ENCODE measurements at regions of chr9 and their contacts with region 1.

Region 1: DNA sequence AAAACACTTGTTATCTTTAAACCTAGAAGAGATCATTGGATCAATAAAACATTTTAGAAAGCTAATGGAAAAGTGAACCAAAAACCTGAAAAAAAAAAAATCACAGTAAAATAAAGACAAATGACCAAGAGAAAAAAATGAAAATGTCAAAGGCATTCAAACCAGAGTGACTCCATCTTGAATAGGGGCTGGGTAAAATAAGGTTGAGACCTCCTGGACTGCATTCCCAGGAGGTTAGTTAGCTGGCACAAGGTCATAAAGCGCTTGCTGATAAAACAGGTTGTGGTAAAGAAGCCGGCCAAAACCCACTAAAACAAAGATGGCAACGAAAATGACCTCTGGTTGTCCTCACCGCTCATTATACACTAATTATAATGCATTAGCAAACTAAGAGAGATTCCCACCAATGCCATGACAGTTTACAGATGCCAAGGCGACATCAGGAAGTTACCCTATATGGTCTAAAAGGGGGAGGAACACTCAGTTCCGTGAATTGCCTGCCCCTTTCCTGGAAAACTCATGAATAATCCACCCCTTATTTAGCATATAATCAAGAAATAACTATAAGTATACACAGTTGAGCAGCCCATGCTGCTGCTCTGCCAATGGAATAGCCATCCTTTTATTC is 116.7 kb upstream of the NEK6 start:
- DNase-seq: no peak
- ATAC-seq: no peak
- H3K4me3 ChIP-seq: no peak overlapping the region
- H3K27ac ChIP-seq: no peak overlapping the region
- H3K4me1 ChIP-seq: peaks cover 32% of the 10 kb centered on the region
- H3K27me3 ChIP-seq: peaks cover 2 to 4% of the 10 kb centered on the region in 2 experiments; a peak in 1 of 5 replicates
- CTCF ChIP-seq: no peak
- EP300 ChIP-seq: no peak
- POLR2A ChIP-seq: no peak
- RAD21 ChIP-seq: no peak

Region 2: DNA sequence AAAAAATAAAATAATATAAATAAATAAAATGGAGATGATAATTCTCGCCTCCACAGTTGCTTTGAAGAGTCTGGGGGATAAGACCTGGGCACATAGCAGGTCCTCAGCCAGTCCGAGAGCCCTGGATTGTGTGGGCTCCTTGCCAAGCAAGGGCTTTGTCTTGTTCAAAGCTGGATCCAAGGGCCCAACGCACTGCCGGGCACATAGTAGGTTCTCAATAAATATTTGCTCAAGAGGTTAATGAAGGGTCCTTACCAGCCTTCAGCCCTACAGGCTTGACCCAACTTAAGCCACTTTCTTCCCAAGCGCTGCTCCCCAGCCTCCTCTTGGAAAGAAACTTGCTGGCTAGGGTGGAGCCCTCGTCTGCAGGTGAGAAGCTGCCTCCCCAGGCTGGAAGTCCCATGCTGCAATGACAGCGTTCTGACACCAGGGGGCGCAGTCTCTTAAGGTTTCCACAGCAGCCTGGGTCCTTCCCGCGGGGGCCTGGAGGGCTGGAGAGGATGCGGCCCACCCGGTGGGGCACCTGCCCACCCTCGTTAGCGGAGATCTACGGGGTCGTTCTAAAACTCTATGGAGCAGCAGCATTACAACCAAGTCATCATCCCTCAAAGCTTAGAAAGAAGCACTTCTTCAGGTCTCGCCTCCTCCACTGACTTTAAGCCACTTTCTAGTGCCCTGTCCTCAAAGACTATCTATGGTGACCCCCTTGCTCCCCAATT is 14.3 kb before region 1 on chr9:
- CTCF ChIA-PET with region 1: no interaction called
- POLR2A ChIA-PET with region 1: no interaction called
- in situ Hi-C with region 1: no loop called
- intact Hi-C with region 1: no loop called
- DNase-seq: peak; percentile 56
- ATAC-seq: peak; percentile 69
- H3K4me3 ChIP-seq: no peak overlapping the region
- H3K27ac ChIP-seq: no peak overlapping the region
- H3K4me1 ChIP-seq: peaks cover 20% of the 10 kb centered on the region
- H3K27me3 ChIP-seq: peaks cover 2 to 13% of the 10 kb centered on the region in 2 experiments; a peak in 3 of 5 replicates
- CTCF ChIP-seq: peak; percentile 97
- EP300 ChIP-seq: no peak
- POLR2A ChIP-seq: no peak
- RAD21 ChIP-seq: peak; percentile 90

Region 3: DNA sequence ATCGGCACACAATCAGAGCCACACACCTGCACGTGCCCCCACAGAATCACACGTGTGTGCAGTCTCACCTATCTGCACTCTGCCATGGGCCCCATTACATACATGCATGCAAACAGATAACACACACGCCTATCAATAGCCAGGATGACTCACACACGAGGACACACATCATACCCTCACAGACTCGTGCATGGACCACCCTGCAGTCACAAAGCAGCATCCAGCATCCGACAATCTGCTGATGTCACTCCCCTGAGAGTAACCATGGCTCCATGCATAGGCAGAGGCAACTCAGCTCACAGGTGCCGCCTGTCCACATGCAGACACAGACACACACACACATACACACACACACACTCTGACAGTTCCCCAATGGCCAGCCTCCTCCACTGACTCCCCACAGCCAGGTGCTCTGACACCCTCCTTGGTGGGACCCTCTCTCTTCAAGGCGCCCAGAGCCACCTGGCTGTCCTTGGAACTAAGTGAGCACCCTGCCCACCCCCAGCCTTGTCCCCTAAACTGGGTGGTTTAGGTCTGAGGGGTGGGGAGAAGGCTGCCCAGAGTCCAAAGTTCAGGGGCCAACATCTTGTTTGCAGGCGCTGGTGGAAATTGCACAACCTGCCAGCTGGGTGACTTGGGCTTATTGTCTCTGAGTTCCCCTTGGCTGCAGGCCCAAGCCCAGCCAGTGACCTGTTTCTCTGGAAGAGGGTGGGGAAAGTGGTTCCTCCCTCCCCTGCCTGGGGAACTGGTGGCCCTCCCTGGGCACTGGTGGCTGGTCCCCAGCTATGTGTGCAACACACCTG is 82.1 kb after region 1 on chr9:
- CTCF ChIA-PET with region 1: no interaction called
- POLR2A ChIA-PET with region 1: interaction called, 3 read pairs
- in situ Hi-C with region 1: no loop called
- intact Hi-C with region 1: loop called (anchors 5 kb)
- DNase-seq: peak; percentile 96
- ATAC-seq: peak; percentile 88
- H3K4me3 ChIP-seq: peak overlapping the region in 1 of 3 experiments; percentile 47; a peak in 2 of 6 replicates
- H3K27ac ChIP-seq: peak overlapping the region; percentile 60
- H3K4me1 ChIP-seq: peaks cover 65% of the 10 kb centered on the region
- H3K27me3 ChIP-seq: no peaks in the 10 kb centered on the region
- CTCF ChIP-seq: peak; percentile 25
- EP300 ChIP-seq: peak; percentile 89 to 93
- POLR2A ChIP-seq: no peak
- RAD21 ChIP-seq: peak; percentile 21; the same call in 1 of the 2 replicates

Region 4: GRCh38 chr9:124238546-124239140 is 97.6 kb after region 1 on chr9:
- CTCF ChIA-PET with region 1: no interaction called
- POLR2A ChIA-PET with region 1: no interaction called
- in situ Hi-C with region 1: no loop called
- intact Hi-C with region 1: no loop called
- DNase-seq: no peak
- ATAC-seq: no peak
- H3K4me3 ChIP-seq: no peak overlapping the region
- H3K27ac ChIP-seq: no peak overlapping the region
- H3K4me1 ChIP-seq: peaks cover 46% of the 10 kb centered on the region
- H3K27me3 ChIP-seq: peaks cover 0 to 2% of the 10 kb centered on the region in 2 experiments; a peak in 3 of 5 replicates
- CTCF ChIP-seq: no peak
- EP300 ChIP-seq: no peak
- POLR2A ChIP-seq: no peak
- RAD21 ChIP-seq: no peak